ENCODE measurements at regions of chr3 and their contacts with region 1.

Region 1: GRCh38 chr3:190224863-190225692 is 97.2 kb downstream of the CLDN1 start:
- DNase-seq: peak in 1 of 6 donors; percentile 21
- ATAC-seq: peak; percentile 48 to 83 (median 74)
- H3K4me3 ChIP-seq: no peak overlapping the region
- H3K27ac ChIP-seq: no peak overlapping the region
- H3K4me1 ChIP-seq: no peaks in the 10 kb centered on the region
- H3K27me3 ChIP-seq: no peaks in the 10 kb centered on the region
- CTCF ChIP-seq: peak in 3 of 4 donors; percentile 22 to 37 (median 26)

Region 2: GRCh38 chr3:189477614-189478013 is 747.5 kb before region 1 on chr3:
- intact Hi-C with region 1: no loop called
- DNase-seq: peak in 1 of 6 donors; percentile 45
- ATAC-seq: no peak
- H3K4me3 ChIP-seq: no peak overlapping the region
- H3K27ac ChIP-seq: no peak overlapping the region
- H3K4me1 ChIP-seq: no peaks in the 10 kb centered on the region
- H3K27me3 ChIP-seq: peaks cover 0 to 4% (median 0%) of the 10 kb centered on the region in 4 donors
- CTCF ChIP-seq: no peak

Region 3: DNA sequence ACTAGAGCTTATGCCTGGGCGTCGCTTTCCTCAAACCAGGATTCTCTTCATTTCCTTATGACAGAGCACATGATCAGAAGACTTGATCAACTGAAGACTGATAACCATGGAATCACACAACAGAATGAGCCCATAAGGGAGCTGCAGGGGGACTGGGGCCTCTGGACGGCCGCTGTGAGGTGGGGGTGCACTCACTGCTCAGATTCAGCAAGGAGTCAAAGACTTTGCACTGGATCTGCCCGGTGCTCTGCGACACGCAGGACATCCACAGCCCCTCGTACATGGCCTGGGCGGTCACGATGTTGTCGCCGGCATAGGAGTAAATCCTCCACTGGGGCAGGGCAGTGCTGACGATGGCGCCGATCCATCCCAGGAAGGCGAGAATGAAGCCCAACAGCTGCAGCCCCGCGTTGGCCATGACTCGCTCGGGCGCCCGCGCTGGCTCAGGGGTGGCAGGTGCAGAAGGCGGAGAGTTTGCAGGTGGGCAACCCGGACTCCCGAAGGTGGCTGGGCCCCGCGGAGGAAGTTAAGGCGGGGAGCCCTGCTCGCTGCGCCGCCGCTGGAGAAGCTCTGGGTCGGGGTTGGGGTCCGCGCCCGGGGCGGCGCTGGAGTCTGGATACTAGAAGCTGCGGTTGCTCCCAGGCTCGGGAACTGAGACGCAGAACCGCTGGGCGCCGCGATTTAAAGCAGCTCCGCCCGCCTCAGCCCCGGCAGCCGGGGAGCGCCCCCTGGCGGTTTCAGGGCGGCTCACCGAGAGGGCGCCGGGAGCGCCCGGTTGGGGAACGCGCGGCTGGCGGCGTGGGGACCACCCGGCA is 96.9 kb after region 1 on chr3 and contains the start of gene CLDN1:
- intact Hi-C with region 1: loop called in 1 of 3 experiments (anchors 2 kb)
- DNase-seq: peak; percentile 78 to 98 (median 86)
- ATAC-seq: peak; percentile 88 to 91 (median 90)
- H3K4me3 ChIP-seq: peak within 1 kb of the TSS; percentile 34 to 82 (median 60)
- H3K27ac ChIP-seq: peak within 1 kb of the TSS; percentile 60 to 94 (median 84)
- H3K4me1 ChIP-seq: peaks cover 0 to 13% (median 0%) of the 10 kb centered on the region in 3 donors
- H3K27me3 ChIP-seq: no peaks in the 10 kb centered on the region
- CTCF ChIP-seq: peak; percentile 97 to 98 (median 98)
- total RNA-seq, gene CLDN1: 20.6 to 107 (median 28.3) TPM

Region 4: GRCh38 chr3:190339130-190339529 is 114.1 kb after region 1 on chr3:
- intact Hi-C with region 1: loop called in 1 of 3 experiments (anchors 10 kb)
- DNase-seq: no peak
- ATAC-seq: peak in 3 of 4 donors; percentile 43 to 70 (median 59)
- H3K4me3 ChIP-seq: no peak overlapping the region
- H3K27ac ChIP-seq: no peak overlapping the region
- H3K4me1 ChIP-seq: peaks cover 0 to 6% (median 3%) of the 10 kb centered on the region in 3 donors
- H3K27me3 ChIP-seq: no peaks in the 10 kb centered on the region
- CTCF ChIP-seq: no peak

Region 5: DNA sequence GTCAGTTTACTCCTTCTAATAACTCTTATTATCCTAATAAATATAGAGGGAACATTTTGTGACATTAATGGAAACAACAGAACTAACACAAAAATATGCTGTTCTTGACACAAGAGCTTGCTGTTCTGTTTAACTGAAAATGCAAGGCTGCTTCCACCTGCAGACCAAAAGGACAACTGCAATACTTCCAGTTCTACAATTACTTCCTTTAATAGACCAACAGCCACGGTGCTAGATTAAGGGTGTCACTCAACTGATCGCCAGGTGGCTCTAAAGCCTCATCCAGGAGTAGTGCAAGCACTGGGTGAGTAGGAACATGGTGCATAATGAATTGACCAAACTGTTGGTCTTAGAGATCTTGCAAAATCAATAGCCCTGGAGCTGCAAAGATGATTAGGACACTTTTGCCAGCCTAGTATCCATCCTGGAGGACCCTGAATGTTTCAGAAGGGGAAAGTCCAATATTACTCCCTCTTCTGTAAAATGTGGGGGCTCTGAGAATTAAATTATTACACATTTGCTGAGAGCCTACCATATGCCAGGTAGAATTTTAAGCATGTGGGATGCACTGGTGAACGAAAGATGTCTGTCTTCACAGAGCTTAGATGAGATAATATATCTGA is 159.3 kb after region 1 on chr3:
- intact Hi-C with region 1: loop called in 1 of 3 experiments (anchors 10 kb)
- DNase-seq: peak in 4 of 6 donors; percentile 14 to 57 (median 42)
- ATAC-seq: peak; percentile 88 to 99 (median 97)
- H3K4me3 ChIP-seq: no peak overlapping the region
- H3K27ac ChIP-seq: no peak overlapping the region
- H3K4me1 ChIP-seq: no peaks in the 10 kb centered on the region
- H3K27me3 ChIP-seq: no peaks in the 10 kb centered on the region
- CTCF ChIP-seq: peak in 3 of 4 donors; percentile 39 to 56 (median 43)

Measured in pancreas (tissue), 10 donors.